Activated CD4-positive, alpha-beta T cell treated with anti-CD3 and anti-CD28 coated beads for 36 hours (primary cell): ENCODE measurements at regions of chr17 and their contacts with region 1.

Region 1: DNA sequence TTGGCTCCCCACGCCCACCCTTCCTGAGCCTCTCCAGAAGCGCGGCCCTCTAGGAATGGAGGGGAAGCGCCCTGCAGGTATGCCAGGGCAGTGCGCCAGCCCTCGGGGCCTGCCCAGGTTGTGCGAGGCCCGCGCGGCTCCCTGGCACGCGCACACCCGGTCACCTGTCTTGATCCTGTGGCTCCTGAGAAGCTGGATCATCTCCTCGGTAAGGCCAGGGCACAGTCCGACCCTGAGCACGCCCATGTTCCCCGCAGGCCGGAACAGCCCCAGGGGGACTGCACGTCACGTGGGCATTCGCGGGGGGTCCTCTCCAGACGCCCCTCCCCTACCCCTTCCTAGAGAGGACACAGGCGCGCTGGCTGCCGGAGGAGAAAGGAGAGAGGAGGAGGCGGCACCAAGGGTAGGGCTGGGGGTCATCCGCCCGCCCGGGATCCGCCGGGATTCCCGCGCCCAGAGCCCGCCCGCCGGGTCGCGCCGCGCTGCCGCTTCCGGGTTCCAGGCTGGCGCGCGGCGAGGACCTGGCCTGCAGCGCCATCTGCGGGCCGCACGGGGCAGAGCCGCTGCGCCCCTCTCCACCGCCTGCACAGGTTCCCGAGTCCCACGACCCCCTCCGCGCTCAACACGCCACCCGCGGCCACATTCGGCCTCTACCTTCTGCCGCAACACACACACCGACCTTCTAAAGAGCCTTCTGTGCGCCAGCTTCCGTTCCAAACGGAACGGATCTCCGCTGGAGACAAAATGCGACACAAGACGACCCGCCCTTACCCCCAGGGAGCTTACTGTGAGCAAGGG is at the start of gene RAD51D:
- DNase-seq: peak; percentile 90
- ATAC-seq: peak; percentile 88
- H3K4me3 Mint-ChIP-seq: peak within 1 kb of the TSS; percentile 85
- H3K27ac Mint-ChIP-seq: peak within 1 kb of the TSS; percentile 92
- H3K4me1 Mint-ChIP-seq: peaks cover 33% of the 10 kb centered on the region
- H3K27me3 Mint-ChIP-seq: no peaks in the 10 kb centered on the region
- total RNA-seq, gene RAD51D: 19.9 to 31.8 TPM

Region 2: GRCh38 chr17:34199932-34200534 is 919.5 kb before region 1 on chr17:
- CTCF ChIA-PET with region 1: no interaction called
- POLR2A ChIA-PET with region 1: no interaction called
- intact Hi-C with region 1: loop called in 1 of 2 experiments (anchors 2 kb)
- DNase-seq: peak; percentile 82
- ATAC-seq: peak; percentile 69
- H3K4me3 Mint-ChIP-seq: no peak overlapping the region
- H3K27ac Mint-ChIP-seq: no peak overlapping the region
- H3K4me1 Mint-ChIP-seq: peaks cover 15% of the 10 kb centered on the region
- H3K27me3 Mint-ChIP-seq: peaks cover 43% of the 10 kb centered on the region

Region 3: GRCh38 chr17:34637548-34638525 is 481.7 kb before region 1 on chr17:
- CTCF ChIA-PET with region 1: interaction called, 3 read pairs
- POLR2A ChIA-PET with region 1: interaction called, 3 read pairs
- intact Hi-C with region 1: loop called in 1 of 2 experiments (anchors 2 kb)
- DNase-seq: peak; percentile 91
- ATAC-seq: peak; percentile 99
- H3K4me3 Mint-ChIP-seq: peak overlapping the region; percentile 56
- H3K27ac Mint-ChIP-seq: peak overlapping the region; percentile 29
- H3K4me1 Mint-ChIP-seq: peaks cover 4% of the 10 kb centered on the region
- H3K27me3 Mint-ChIP-seq: peaks cover 6% of the 10 kb centered on the region

Region 4: GRCh38 chr17:34930283-34930682 is 189.3 kb before region 1 on chr17:
- CTCF ChIA-PET with region 1: no interaction called
- POLR2A ChIA-PET with region 1: no interaction called
- intact Hi-C with region 1: no loop called
- DNase-seq: no peak
- ATAC-seq: no peak
- H3K4me3 Mint-ChIP-seq: no peak overlapping the region
- H3K27ac Mint-ChIP-seq: no peak overlapping the region
- H3K4me1 Mint-ChIP-seq: no peaks in the 10 kb centered on the region
- H3K27me3 Mint-ChIP-seq: peaks cover 2% of the 10 kb centered on the region

Region 5: GRCh38 chr17:34961093-34961911 is 158.3 kb before region 1 on chr17 and contains the starts of genes CCT6B and ZNF830:
- CTCF ChIA-PET with region 1: interaction called, 4 read pairs
- POLR2A ChIA-PET with region 1: no interaction called
- intact Hi-C with region 1: loop called in 1 of 2 experiments (anchors 1 kb)
- DNase-seq: peak; percentile 95
- ATAC-seq: peak; percentile 91
- H3K4me3 Mint-ChIP-seq: peak within 1 kb of the TSS; percentile 99
- H3K27ac Mint-ChIP-seq: peak within 1 kb of the TSS; percentile 100
- H3K4me1 Mint-ChIP-seq: peaks cover 26% of the 10 kb centered on the region
- H3K27me3 Mint-ChIP-seq: no peaks in the 10 kb centered on the region
- total RNA-seq, gene CCT6B: 0.95 to 1.6 TPM
- total RNA-seq, gene ZNF830: 20.0 TPM

Region 6: GRCh38 chr17:34998205-34998604 is 121.4 kb before region 1 on chr17:
- CTCF ChIA-PET with region 1: interaction called, 15 read pairs
- POLR2A ChIA-PET with region 1: no interaction called
- intact Hi-C with region 1: loop called (anchors 1 kb)
- DNase-seq: peak; percentile 89
- ATAC-seq: peak; percentile 100
- H3K4me3 Mint-ChIP-seq: no peak overlapping the region
- H3K27ac Mint-ChIP-seq: peak overlapping the region; percentile 51
- H3K4me1 Mint-ChIP-seq: peaks cover 6% of the 10 kb centered on the region
- H3K27me3 Mint-ChIP-seq: no peaks in the 10 kb centered on the region

Region 7: GRCh38 chr17:35094902-35095301 is 24.7 kb before region 1 on chr17:
- CTCF ChIA-PET with region 1: interaction called, 28 read pairs
- POLR2A ChIA-PET with region 1: interaction called, 5 read pairs
- intact Hi-C with region 1: no loop called
- DNase-seq: no peak
- ATAC-seq: peak; percentile 68
- H3K4me3 Mint-ChIP-seq: no peak overlapping the region
- H3K27ac Mint-ChIP-seq: no peak overlapping the region
- H3K4me1 Mint-ChIP-seq: peaks cover 11% of the 10 kb centered on the region
- H3K27me3 Mint-ChIP-seq: no peaks in the 10 kb centered on the region